Right lobe of liver (tissue), 6 donors: ENCODE measurements at regions of chr17 and their contacts with region 1.

Region 1: DNA sequence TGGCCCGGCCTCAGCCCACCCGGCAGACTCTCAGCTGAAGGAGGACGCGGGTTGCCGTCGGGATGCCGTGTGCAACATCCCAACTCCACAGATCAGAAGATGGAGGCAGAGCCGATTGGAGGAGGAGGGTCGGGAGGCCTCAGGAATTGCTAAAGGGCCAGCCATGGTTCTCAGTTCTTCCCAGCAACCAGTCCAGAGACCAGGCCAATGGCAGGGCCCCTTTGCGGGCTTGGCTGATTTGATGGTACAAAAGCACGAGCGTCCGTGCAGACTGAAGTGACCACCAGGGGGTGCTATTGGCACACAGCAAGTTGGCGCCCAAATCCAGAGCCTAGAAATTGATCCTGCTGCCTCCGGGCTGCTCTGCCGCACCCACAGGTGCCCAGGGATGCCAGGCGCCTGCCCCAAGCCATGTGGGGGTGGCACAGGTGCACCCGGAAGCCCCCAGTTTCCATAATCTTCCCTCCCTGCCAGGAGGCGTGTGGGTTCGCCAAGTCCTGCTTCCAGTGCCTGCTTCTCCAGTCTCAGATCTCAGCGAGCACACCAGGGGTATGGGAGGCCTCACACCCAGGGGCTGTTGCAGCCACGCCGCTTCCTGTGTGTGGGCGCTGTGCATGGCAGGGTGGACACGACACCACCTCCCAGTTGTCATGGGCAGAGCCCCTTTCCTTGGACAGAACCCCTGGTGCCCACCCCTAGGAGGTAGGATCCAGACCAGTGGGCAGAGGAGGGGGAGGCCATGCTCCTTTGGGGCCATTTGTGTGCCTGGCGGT is 7.1 kb upstream of the TEX19 start:
- DNase-seq: peak; percentile 78 to 82 (median 81)
- ATAC-seq: peak; percentile 83 to 95 (median 90)
- H3K4me3 ChIP-seq: no peak overlapping the region
- H3K27ac ChIP-seq: no peak overlapping the region
- H3K4me1 ChIP-seq: peaks cover 0 to under 1% (median 0%) of the 10 kb centered on the region in 4 donors
- H3K27me3 ChIP-seq: no peaks in the 10 kb centered on the region
- CTCF ChIP-seq: peak; percentile 94 to 98 (median 97)
- POLR2A ChIP-seq: no peak

Region 2: DNA sequence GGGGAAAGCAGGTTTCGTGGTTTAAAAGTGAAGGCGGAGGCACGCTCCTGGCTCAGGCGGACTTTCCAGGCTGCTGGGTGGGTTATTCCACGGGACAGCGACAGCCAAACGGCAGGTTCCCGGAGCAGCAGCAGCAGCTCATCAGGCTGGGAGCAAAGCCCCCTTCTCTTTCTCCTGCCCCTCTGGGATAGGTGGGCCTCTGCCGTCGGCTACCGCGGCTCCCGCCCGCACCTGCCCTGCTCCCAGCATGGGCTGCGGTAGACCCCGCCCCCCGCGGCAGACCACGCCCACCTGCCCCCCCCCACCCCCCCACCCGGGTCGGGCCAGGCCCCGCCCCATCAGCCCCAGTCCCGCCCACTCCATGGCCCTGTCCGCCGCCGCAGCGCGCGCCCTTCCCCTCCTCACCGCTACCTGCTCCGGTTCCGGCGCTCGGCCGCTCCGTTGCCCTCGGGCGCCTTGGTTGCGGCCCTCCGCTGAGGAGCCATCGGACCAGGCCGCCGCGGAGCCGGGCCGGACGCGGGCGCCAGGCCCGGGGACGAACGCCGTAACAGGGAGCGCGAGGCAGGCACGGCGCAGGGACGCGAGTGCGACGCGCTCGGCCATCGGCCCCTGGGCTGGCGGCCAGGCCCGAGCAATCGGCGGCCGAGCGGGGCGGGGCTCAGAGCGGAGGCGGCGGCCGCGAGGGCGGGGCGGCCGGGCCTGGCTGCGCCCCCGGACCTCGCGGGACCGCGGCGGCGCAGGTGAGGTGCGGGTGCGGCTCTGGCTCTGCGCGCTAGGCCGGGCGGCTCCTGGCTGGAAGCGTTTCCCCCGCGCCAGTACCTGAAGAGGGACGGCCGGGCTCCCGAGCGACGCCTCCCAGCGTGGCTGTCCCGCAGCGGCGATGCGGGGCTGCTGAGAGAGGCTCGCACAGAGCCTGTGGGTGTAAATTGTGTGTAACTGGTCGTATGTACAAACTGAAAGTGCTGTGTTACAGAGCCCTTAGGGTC is 66.4 kb after region 1 on chr17 and contains the starts of genes HEXD and OGFOD3:
- intact Hi-C with region 1: loop called in 1 of 2 experiments (anchors 10 kb)
- DNase-seq: peak; percentile 88
- ATAC-seq: peak; percentile 87 to 96 (median 90)
- H3K4me3 ChIP-seq: peak within 1 kb of the TSS; percentile 73 to 88 (median 83)
- H3K27ac ChIP-seq: peak within 1 kb of the TSS; percentile 74 to 87 (median 87)
- H3K4me1 ChIP-seq: peaks cover 0 to 22% (median 6%) of the 10 kb centered on the region in 4 donors
- H3K27me3 ChIP-seq: no peaks in the 10 kb centered on the region
- CTCF ChIP-seq: peak in 1 of 4 donors; percentile 31
- POLR2A ChIP-seq: peak; percentile 63
- total RNA-seq, gene HEXD: 9.6 to 30.4 (median 20.2) TPM
- total RNA-seq, gene OGFOD3: 13.5 to 23.4 (median 16.2) TPM

Region 3: GRCh38 chr17:82551779-82552457 is 200.0 kb after region 1 on chr17:
- intact Hi-C with region 1: loop called (anchors 10 kb)
- DNase-seq: peak; percentile 66 to 76 (median 67)
- ATAC-seq: peak; percentile 83 to 91 (median 86)
- H3K4me3 ChIP-seq: no peak overlapping the region
- H3K27ac ChIP-seq: no peak overlapping the region
- H3K4me1 ChIP-seq: peaks cover 0 to 23% (median 5%) of the 10 kb centered on the region in 4 donors
- H3K27me3 ChIP-seq: no peaks in the 10 kb centered on the region
- CTCF ChIP-seq: peak; percentile 64 to 72 (median 68)
- POLR2A ChIP-seq: no peak

Region 4: DNA sequence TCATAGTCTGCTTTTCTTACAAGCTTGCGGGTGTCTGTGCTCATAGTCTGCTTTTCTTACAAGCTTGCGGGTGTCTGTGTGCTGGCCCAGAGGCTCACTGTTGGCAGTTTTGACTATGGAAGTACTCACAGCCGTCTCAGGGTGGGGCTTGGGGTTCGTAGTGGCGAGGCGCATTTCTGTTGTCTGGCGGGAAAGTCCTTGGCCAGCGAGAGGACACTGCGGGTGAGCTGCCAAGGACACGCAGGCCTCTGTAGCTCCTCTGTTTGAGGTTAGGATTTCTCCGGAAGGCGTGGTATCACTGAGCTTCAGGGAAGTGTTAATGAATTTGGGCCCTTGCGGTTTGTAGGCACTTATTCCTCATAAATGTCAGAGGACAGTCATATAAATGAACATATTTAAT is 413.5 kb after region 1 on chr17:
- intact Hi-C with region 1: no loop called
- DNase-seq: peak in 1 of 3 donors; percentile 30
- ATAC-seq: no peak
- H3K4me3 ChIP-seq: no peak overlapping the region
- H3K27ac ChIP-seq: no peak overlapping the region
- H3K4me1 ChIP-seq: no peaks in the 10 kb centered on the region
- H3K27me3 ChIP-seq: no peaks in the 10 kb centered on the region
- CTCF ChIP-seq: no peak
- POLR2A ChIP-seq: no peak